Activated naive CD4-positive, alpha-beta T cell treated with anti-CD3 and anti-CD28 coated beads for 36 hours (primary cell): ENCODE measurements at regions of chr6 and their contacts with region 1.

Region 1: GRCh38 chr6:150417899-150418826 is 49.4 kb downstream of the IYD start:
- DNase-seq: peak; percentile 52
- H3K4me3 Mint-ChIP-seq: peak overlapping the region; percentile 59
- H3K27ac Mint-ChIP-seq: peak overlapping the region; percentile 72
- H3K4me1 Mint-ChIP-seq: peaks cover 24% of the 10 kb centered on the region
- H3K27me3 Mint-ChIP-seq: peaks cover 15% of the 10 kb centered on the region

Region 2: GRCh38 chr6:150491131-150491810 is 73.1 kb after region 1 on chr6:
- CTCF ChIA-PET with region 1: interaction called, 3 read pairs
- intact Hi-C with region 1: loop called (anchors 2 kb)
- DNase-seq: peak; percentile 20
- H3K4me3 Mint-ChIP-seq: peak overlapping the region; percentile 51
- H3K27ac Mint-ChIP-seq: peak overlapping the region; percentile 82
- H3K4me1 Mint-ChIP-seq: peaks cover 9% of the 10 kb centered on the region
- H3K27me3 Mint-ChIP-seq: peaks cover 6% of the 10 kb centered on the region

Region 3: GRCh38 chr6:150632785-150633485 is 214.8 kb after region 1 on chr6:
- CTCF ChIA-PET with region 1: interaction called, 5 read pairs
- intact Hi-C with region 1: loop called (anchors 2 kb)
- DNase-seq: peak; percentile 17
- H3K4me3 Mint-ChIP-seq: peak overlapping the region; percentile 57
- H3K27ac Mint-ChIP-seq: peak overlapping the region; percentile 84
- H3K4me1 Mint-ChIP-seq: peaks cover 62% of the 10 kb centered on the region
- H3K27me3 Mint-ChIP-seq: peaks cover 44% of the 10 kb centered on the region

Region 4: GRCh38 chr6:150685860-150686259 is 267.7 kb after region 1 on chr6:
- CTCF ChIA-PET with region 1: no interaction called
- intact Hi-C with region 1: loop called (anchors 2 kb)
- DNase-seq: peak; percentile 71
- H3K4me3 Mint-ChIP-seq: no peak overlapping the region
- H3K27ac Mint-ChIP-seq: no peak overlapping the region
- H3K4me1 Mint-ChIP-seq: peaks cover 2% of the 10 kb centered on the region
- H3K27me3 Mint-ChIP-seq: no peaks in the 10 kb centered on the region

Region 5: GRCh38 chr6:150741633-150742504 is 323.7 kb after region 1 on chr6:
- CTCF ChIA-PET with region 1: interaction called, 6 read pairs
- intact Hi-C with region 1: loop called (anchors 1 kb)
- DNase-seq: peak; percentile 42
- H3K4me3 Mint-ChIP-seq: no peak overlapping the region
- H3K27ac Mint-ChIP-seq: no peak overlapping the region
- H3K4me1 Mint-ChIP-seq: no peaks in the 10 kb centered on the region
- H3K27me3 Mint-ChIP-seq: peaks cover 12% of the 10 kb centered on the region

Region 6: DNA sequence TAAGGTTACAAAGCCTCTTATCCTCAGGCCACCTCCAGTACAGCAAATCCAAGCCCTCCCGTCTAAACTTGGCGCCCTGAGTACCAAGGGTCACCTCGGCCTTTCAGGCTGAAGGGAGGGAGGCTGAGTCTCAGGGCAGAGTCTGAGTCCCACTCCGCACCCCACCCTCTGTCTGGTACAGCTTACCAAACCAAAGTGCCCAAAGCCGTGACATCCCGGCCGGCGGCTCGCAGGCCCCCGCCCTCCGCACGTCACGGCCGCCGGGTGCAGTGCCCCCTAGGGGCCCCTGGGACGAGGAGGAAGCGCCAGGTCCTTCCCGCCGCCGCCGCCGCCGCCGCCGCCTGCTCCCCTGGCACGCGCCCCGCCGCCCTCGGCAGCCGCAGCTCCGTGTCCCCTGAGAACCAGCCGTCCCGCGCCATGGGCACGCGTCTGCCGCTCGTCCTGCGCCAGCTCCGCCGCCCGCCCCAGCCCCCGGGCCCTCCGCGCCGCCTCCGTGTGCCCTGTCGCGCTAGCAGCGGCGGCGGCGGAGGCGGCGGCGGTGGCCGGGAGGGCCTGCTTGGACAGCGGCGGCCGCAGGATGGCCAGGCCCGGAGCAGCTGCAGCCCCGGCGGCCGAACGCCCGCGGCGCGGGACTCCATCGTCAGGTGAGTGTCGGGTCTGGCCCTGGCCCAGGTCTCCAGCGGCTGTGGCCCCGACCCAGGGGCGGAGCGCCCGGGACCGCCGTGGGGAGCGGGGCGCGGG is 447.4 kb after region 1 on chr6 and contains the start of gene MTHFD1L:
- CTCF ChIA-PET with region 1: interaction called, 4 read pairs
- intact Hi-C with region 1: loop called (anchors 2 kb)
- DNase-seq: peak; percentile 79
- H3K4me3 Mint-ChIP-seq: peak within 1 kb of the TSS; percentile 96
- H3K27ac Mint-ChIP-seq: peak within 1 kb of the TSS; percentile 91
- H3K4me1 Mint-ChIP-seq: peaks cover 30% of the 10 kb centered on the region
- H3K27me3 Mint-ChIP-seq: peaks cover 15% of the 10 kb centered on the region
- total RNA-seq, gene MTHFD1L: 181 to 194 TPM